Mammary epithelial cell (primary cell): ENCODE measurements at regions of chr16 and their contacts with region 1.

Region 1: DNA sequence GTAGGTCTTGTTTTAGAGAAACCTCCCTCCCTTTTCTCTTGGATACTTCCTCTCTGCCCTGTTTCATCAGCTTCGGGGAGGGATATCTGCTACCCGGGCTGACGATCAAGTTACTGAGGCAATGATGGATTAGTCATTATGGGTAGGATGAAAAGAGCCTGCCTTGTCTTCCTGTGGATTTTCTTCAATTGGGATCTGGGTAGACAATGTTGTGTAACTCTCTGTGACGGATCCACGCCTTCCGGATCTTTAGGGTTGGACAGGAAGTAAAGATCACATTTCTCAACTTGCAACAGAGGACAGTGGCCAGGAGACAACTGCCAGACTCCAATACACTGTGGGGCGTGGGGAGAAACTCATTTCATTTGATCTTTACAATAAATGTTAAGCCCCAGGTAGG is 11.3 kb upstream of the CHST6 start:
- DNase-seq: peak; percentile 93
- H3K4me3 ChIP-seq: no peak overlapping the region
- H3K27ac ChIP-seq: peak overlapping the region; percentile 86
- H3K4me1 ChIP-seq: peaks cover 39% of the 10 kb centered on the region
- H3K27me3 ChIP-seq: no peaks in the 10 kb centered on the region
- CTCF ChIP-seq: no peak

Region 2: GRCh38 chr16:75486676-75487313 is 19.8 kb before region 1 on chr16:
- CTCF ChIA-PET with region 1: no interaction called
- dilution Hi-C with region 1: no loop called
- in situ Hi-C with region 1: no loop called
- intact Hi-C with region 1: loop called (anchors 1 kb)
- DNase-seq: peak; percentile 32
- H3K4me3 ChIP-seq: no peak overlapping the region
- H3K27ac ChIP-seq: no peak overlapping the region
- H3K4me1 ChIP-seq: peaks cover 45% of the 10 kb centered on the region
- H3K27me3 ChIP-seq: no peaks in the 10 kb centered on the region
- CTCF ChIP-seq: no peak

Region 3: GRCh38 chr16:75491876-75492275 is 14.7 kb before region 1 on chr16:
- CTCF ChIA-PET with region 1: interaction called, 11 read pairs
- dilution Hi-C with region 1: no loop called
- in situ Hi-C with region 1: no loop called
- intact Hi-C with region 1: no loop called
- DNase-seq: peak; percentile 36
- H3K4me3 ChIP-seq: no peak overlapping the region
- H3K27ac ChIP-seq: no peak overlapping the region
- H3K4me1 ChIP-seq: peaks cover 18% of the 10 kb centered on the region
- H3K27me3 ChIP-seq: no peaks in the 10 kb centered on the region
- CTCF ChIP-seq: peak; percentile 32 to 60